ENCODE measurements at regions of chrX and their contacts with region 1.

Region 1: DNA sequence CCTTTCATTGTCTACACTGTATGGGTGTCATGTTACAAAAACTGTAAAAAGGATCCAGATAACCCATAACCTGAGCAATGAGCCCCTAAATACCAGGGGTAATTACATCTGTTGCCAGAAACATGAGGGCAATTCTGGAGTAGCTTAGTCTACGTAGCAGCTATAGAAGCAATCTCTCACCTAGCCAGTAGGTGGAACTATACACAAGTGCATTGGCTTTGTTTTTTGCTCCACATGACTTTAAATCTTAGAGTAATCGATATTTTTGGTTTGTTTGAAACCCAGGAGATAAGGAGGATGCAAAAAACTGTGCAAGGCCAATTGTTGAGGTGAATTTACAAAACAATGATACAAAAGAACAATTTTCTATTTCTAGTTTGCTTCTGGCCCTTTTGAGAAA is 57.5 kb downstream of the GPR82 start:
- DNase-seq: no peak
- ATAC-seq: no peak
- H3K4me3 ChIP-seq: no peak overlapping the region
- H3K27ac ChIP-seq: no peak overlapping the region
- H3K4me1 ChIP-seq: no peaks in the 10 kb centered on the region
- H3K27me3 ChIP-seq: no peaks in the 10 kb centered on the region
- CTCF ChIP-seq: peak in 4 of 5 experiments; percentile 17 to 64 (median 50)
- POLR2A ChIP-seq: no peak

Region 2: GRCh38 chrX:42246814-42247213 is 465.3 kb after region 1 on chrX:
- in situ Hi-C with region 1: loop called in 1 of 4 experiments (anchors 25 kb)
- intact Hi-C with region 1: no loop called
- DNase-seq: no peak
- ATAC-seq: no peak
- H3K4me3 ChIP-seq: no peak overlapping the region
- H3K27ac ChIP-seq: no peak overlapping the region
- H3K4me1 ChIP-seq: no peaks in the 10 kb centered on the region
- H3K27me3 ChIP-seq: no peaks in the 10 kb centered on the region
- CTCF ChIP-seq: no peak
- POLR2A ChIP-seq: no peak

Region 3: GRCh38 chrX:43525901-43526610 is 1744.6 kb after region 1 on chrX:
- in situ Hi-C with region 1: loop called in 1 of 4 experiments (anchors 25 kb)
- intact Hi-C with region 1: no loop called
- DNase-seq: no peak
- ATAC-seq: no peak
- H3K4me3 ChIP-seq: no peak overlapping the region
- H3K27ac ChIP-seq: no peak overlapping the region
- H3K4me1 ChIP-seq: no peaks in the 10 kb centered on the region
- H3K27me3 ChIP-seq: no peaks in the 10 kb centered on the region
- CTCF ChIP-seq: no peak
- POLR2A ChIP-seq: no peak

Region 4: DNA sequence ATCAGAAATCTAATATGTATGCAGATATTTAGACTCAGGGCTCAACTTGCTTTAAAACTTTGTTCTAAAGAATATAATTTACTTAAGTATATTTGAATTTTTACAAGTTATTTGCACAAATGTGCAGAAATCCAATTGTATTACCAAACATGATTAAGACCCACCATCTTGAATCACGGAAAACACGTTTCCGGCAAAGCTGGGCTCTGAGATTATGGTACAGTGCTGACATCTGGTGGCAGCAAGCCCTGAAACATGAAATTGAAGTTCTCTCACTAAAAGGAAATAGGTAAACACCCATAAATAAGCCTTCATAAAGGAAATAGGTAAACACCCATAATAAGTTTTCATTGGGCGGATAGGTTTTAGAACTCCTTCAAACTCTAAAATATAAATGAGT is 1776.3 kb after region 1 on chrX:
- in situ Hi-C with region 1: loop called in 1 of 4 experiments (anchors 25 kb)
- intact Hi-C with region 1: no loop called
- DNase-seq: peak in 1 of 2 donors; percentile 15
- ATAC-seq: no peak
- H3K4me3 ChIP-seq: no peak overlapping the region
- H3K27ac ChIP-seq: no peak overlapping the region
- H3K4me1 ChIP-seq: no peaks in the 10 kb centered on the region
- H3K27me3 ChIP-seq: no peaks in the 10 kb centered on the region
- CTCF ChIP-seq: peak in 4 of 5 experiments; percentile 34 to 53 (median 36)
- POLR2A ChIP-seq: no peak

Region 5: DNA sequence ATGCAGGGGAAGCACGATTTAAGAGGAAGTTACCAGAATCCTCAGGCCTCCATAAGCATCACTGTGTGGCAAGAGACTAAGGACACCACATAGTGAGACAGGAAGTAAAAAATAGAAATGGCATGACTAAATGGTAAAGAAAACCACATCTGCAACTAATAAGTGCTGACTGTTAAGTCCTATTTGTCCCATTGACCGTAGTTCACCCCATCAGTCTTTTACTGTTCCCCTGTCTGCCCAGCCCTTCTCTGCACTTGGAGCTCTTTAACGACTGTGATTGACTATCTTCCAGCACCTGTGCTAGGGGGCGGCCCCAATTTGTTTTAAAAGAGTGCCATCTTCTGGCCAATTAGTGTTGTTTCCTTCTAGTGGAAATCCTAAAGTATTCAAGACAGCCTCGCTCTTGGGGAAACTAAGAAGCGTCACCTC is 1968.8 kb after region 1 on chrX:
- in situ Hi-C with region 1: loop called in 1 of 4 experiments (anchors 25 kb)
- intact Hi-C with region 1: no loop called
- DNase-seq: peak; percentile 12 to 57
- ATAC-seq: peak; percentile 54 to 75
- H3K4me3 ChIP-seq: no peak overlapping the region
- H3K27ac ChIP-seq: peak overlapping the region in 1 of 4 donors; percentile 43
- H3K4me1 ChIP-seq: no peaks in the 10 kb centered on the region
- H3K27me3 ChIP-seq: no peaks in the 10 kb centered on the region
- CTCF ChIP-seq: peak; percentile 42 to 57 (median 54)
- POLR2A ChIP-seq: no peak

Measured in gastrocnemius medialis (tissue), 4 donors.